Naive thymus-derived CD4-positive, alpha-beta T cell (primary cell): ENCODE measurements at regions of chr3 and their contacts with region 1.

Region 1: DNA sequence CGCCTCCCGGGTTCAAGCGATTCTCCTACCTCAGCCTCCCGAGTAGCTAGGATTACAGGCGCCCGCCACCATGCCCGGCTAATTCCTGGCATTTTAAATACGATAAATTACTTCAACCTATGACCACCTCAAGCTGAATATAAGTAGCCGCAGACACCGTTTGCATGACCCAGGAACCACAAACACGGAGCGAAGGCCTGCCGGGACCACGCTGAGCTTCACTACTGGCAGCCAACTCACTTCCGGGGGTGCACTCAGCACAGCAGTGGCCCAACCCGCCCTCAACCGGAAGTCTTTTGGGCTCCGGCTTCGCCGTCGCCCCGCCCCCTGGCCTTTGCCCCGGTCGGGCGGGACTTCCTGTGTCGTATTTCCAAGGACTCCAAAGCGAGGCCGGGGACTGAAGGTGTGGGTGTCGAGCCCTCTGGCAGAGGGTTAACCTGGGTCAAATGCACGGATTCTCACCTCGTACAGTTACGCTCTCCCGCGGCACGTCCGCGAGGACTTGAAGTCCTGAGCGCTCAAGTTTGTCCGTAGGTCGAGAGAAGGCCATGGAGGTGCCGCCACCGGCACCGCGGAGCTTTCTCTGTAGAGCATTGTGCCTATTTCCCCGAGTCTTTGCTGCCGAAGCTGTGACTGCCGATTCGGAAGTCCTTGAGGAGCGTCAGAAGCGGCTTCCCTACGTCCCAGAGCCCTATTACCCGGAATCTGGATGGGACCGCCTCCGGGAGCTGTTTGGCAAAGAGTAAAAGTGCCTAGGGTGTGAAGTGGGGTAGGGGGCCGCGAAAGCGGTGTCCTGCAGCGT is at the start of gene TIMMDC1:
- DNase-seq: peak; percentile 95 to 98 (median 97)
- ATAC-seq: peak; percentile 99
- H3K4me3 ChIP-seq: peak within 1 kb of the TSS; percentile 97
- H3K4me3 Mint-ChIP-seq: peak within 1 kb of the TSS; percentile 95 to 100 (median 99)
- H3K27ac ChIP-seq: peak within 1 kb of the TSS; percentile 96
- H3K27ac Mint-ChIP-seq: peak within 1 kb of the TSS; percentile 98 to 100 (median 99)
- H3K4me1 ChIP-seq: peaks cover 18% of the 10 kb centered on the region in 2 donors
- H3K4me1 Mint-ChIP-seq: peaks cover 22 to 41% (median 34%) of the 10 kb centered on the region in 7 donors
- H3K27me3 ChIP-seq: no peaks in the 10 kb centered on the region
- H3K27me3 Mint-ChIP-seq: no peaks in the 10 kb centered on the region
- total RNA-seq, gene TIMMDC1: 27.1 to 80.1 (median 73.4) TPM

Region 2: DNA sequence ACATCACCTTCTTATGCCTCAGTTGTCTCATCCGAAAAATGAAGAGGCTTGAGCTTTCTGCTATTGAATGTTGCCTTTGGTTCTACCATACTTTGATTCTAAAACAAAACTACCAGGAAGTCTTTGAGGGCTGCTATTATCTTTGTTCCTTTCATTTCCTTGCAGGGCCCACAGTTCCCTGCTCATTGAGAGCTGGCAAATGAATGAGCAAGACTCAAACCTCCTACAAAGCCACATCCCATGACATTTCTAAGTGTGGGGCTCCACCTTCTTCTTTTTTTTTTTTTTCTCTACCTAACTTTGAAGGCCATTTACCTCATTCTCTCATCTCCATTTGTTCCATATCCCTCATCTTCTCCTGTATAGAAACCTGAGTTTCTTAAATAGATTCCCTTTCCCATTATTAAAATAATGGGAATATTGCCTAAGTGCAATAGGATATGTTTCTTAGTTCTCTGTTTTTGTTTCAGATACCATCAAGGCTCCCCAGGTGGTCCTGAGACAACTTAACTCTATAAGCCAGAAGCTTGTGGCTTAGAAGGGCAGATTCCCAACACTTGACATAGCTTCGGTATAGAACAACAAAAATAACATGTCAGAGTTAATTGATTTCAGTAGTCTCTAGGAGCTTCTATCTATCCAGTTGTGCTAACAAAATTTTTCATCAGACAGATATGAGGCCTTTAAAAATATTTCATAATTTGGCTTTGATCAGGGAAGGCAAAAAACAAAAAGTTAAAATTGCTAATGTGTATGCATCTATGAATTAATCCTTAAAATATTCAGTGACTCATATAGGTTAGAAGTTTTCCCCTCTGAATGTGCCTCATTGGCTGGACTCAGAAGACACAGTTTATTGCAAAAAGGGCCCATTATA is 1837.2 kb before region 1 on chr3:
- CTCF ChIA-PET with region 1: no interaction called
- POLR2A ChIA-PET with region 1: no interaction called
- intact Hi-C with region 1: no loop called
- DNase-seq: no peak
- ATAC-seq: no peak
- H3K4me3 ChIP-seq: no peak overlapping the region
- H3K4me3 Mint-ChIP-seq: no peak overlapping the region
- H3K27ac ChIP-seq: no peak overlapping the region
- H3K27ac Mint-ChIP-seq: no peak overlapping the region
- H3K4me1 ChIP-seq: no peaks in the 10 kb centered on the region
- H3K4me1 Mint-ChIP-seq: no peaks in the 10 kb centered on the region
- H3K27me3 ChIP-seq: no peaks in the 10 kb centered on the region
- H3K27me3 Mint-ChIP-seq: no peaks in the 10 kb centered on the region

Region 3: DNA sequence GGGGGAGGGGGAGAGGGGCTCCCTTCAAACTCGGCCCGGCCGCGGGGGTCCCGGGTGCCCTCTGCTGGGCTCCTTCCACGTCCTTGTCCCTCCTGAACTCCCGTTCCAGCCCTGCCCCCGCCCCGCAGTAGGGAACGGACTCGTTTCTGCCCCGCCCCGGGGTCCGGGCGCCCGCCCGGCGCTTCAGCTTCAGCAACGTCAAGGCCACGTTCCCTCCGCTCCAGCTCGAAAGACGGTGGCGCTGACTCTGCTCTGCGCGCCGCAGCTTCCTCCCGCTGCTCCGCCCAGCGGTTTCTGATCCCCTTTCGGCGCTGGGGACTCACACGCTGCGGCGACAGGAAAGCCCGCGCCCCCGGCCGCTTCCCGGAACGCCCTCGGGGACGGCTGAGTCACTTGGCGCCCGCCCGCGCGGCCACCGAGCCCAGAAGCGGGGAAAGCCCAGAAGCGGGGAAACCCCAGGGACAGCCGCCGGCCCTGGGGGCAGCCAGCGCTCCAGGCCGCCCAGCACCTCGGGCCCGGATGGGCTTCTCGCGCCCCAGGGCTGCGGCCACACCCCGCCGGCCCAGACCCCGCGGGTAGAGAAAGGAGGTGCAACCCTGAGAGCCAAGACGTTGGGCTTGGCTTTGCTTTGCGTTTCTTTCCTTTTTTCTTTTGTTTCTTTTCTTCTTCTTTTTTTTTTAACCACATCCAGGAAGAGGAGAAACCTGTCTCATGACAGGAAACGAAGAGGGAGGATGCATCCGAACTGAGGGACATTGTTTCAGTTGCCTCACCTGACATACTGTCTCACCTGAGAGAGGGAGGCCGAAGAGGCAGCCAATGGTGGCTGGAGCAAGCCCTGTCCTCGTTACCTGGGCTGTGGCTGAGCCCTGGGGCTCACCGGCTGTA is 175.3 kb before region 1 on chr3:
- CTCF ChIA-PET with region 1: no interaction called
- POLR2A ChIA-PET with region 1: interaction called, 4 read pairs
- intact Hi-C with region 1: loop called (anchors 1 kb)
- DNase-seq: peak; percentile 77 to 96 (median 81)
- ATAC-seq: peak; percentile 90
- H3K4me3 ChIP-seq: peak overlapping the region; percentile 65
- H3K4me3 Mint-ChIP-seq: peak overlapping the region; percentile 84 to 96 (median 90)
- H3K27ac ChIP-seq: peak overlapping the region; percentile 81
- H3K27ac Mint-ChIP-seq: peak overlapping the region; percentile 90 to 99 (median 95)
- H3K4me1 ChIP-seq: peaks cover 10 to 14% of the 10 kb centered on the region in 2 donors
- H3K4me1 Mint-ChIP-seq: peaks cover 12 to 30% (median 21%) of the 10 kb centered on the region in 7 donors
- H3K27me3 ChIP-seq: no peaks in the 10 kb centered on the region
- H3K27me3 Mint-ChIP-seq: peaks cover 0 to 57% (median 0%) of the 10 kb centered on the region in 5 donors

Region 4: DNA sequence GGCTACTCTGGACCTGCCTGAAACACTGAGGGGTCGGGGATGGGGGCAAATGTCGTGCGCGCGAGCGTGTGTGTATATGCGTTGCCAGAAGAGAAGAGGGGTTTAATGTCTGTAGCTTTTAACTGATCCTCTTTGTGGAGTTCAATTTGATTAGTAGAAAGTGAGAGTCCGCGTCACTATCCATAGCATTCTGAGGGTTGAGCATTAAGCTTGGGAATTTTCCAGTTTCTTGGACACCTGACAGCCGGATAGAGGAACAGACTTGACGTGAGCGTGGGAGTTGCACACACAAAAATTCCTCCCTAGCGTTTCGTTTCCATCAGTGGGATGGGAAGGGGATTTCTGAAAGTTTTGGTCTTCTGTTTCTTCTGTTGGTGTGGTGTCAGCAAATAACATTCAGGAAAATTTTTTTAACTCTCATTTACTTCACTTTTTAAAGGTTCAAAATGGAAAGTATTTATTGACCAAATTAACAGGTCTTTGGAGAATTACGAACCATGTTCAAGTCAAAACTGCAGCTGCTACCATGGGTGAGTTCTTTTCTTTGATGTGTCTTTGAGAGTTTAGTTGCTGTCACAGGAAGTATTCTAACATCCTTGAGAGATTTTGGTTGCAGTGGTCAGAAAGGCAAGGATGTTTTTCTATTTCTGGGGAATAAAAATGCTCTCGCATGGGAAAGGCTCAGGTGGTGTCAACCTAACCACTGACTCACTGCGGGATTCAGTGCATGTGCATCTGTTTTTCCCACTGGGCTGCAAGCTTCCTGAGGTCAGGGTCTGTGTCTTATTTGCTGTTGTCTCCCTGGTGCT is 28.8 kb before region 1 on chr3:
- CTCF ChIA-PET with region 1: interaction called, 3 read pairs
- POLR2A ChIA-PET with region 1: interaction called, 92 read pairs
- intact Hi-C with region 1: loop called (anchors 1 kb)
- DNase-seq: peak in 7 of 9 donors; percentile 10 to 32 (median 24)
- ATAC-seq: peak; percentile 48
- H3K4me3 ChIP-seq: peak overlapping the region; percentile 86
- H3K4me3 Mint-ChIP-seq: peak overlapping the region; percentile 90 to 97 (median 94)
- H3K27ac ChIP-seq: peak overlapping the region; percentile 88
- H3K27ac Mint-ChIP-seq: peak overlapping the region; percentile 83 to 95 (median 89)
- H3K4me1 ChIP-seq: peaks cover 12% of the 10 kb centered on the region in 2 donors
- H3K4me1 Mint-ChIP-seq: peaks cover 27 to 35% (median 30%) of the 10 kb centered on the region in 7 donors
- H3K27me3 ChIP-seq: no peaks in the 10 kb centered on the region
- H3K27me3 Mint-ChIP-seq: no peaks in the 10 kb centered on the region

Region 5: GRCh38 chr3:119559441-119559963 is 61.1 kb after region 1 on chr3 and contains the start of gene CD80:
- CTCF ChIA-PET with region 1: no interaction called
- POLR2A ChIA-PET with region 1: no interaction called
- intact Hi-C with region 1: loop called in 1 of 2 experiments (anchors 1 kb)
- DNase-seq: peak in 7 of 9 donors; percentile 14 to 63 (median 33)
- ATAC-seq: peak; percentile 76
- H3K4me3 ChIP-seq: no peak within 1 kb of the TSS
- H3K4me3 Mint-ChIP-seq: peak within 1 kb of the TSS in 2 of 10 donors; percentile 12 to 81
- H3K27ac ChIP-seq: no peak within 1 kb of the TSS
- H3K27ac Mint-ChIP-seq: peak within 1 kb of the TSS in 2 of 9 donors; percentile 68 to 71
- H3K4me1 ChIP-seq: peaks cover 0 to 6% of the 10 kb centered on the region in 2 donors
- H3K4me1 Mint-ChIP-seq: peaks cover 0 to 64% (median 8%) of the 10 kb centered on the region in 7 donors
- H3K27me3 ChIP-seq: no peaks in the 10 kb centered on the region
- H3K27me3 Mint-ChIP-seq: peaks cover 0 to 5% (median 0%) of the 10 kb centered on the region in 5 donors
- total RNA-seq, gene CD80: 0.13 to 15.1 (median 1.2) TPM in 3 of 5 experiments, not detected in the others

Region 6: DNA sequence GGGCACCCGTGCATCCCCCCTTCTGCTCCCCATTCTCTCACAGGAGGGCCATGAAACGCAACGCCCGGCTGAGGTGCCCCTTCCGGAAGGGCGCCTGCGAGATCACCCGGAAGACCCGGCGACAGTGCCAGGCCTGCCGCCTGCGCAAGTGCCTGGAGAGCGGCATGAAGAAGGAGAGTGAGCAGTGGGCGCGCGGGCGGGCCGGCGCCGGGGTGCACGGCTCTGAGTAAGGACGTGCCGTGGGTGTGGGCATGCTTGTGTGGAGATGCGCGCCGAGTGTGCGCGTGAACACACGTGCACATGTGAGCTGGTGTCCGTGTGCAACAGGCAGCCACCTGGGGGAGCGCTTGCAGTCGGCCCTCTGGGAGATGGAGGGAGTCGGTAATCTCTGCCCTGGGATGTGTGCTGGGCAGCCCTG is 311.6 kb after region 1 on chr3:
- CTCF ChIA-PET with region 1: no interaction called
- POLR2A ChIA-PET with region 1: no interaction called
- intact Hi-C with region 1: loop called in 1 of 2 experiments (anchors 1 kb)
- DNase-seq: peak; percentile 17 to 57 (median 49)
- ATAC-seq: peak; percentile 83
- H3K4me3 ChIP-seq: peak overlapping the region; percentile 80
- H3K4me3 Mint-ChIP-seq: peak overlapping the region; percentile 82 to 94 (median 88)
- H3K27ac ChIP-seq: peak overlapping the region; percentile 33
- H3K27ac Mint-ChIP-seq: peak overlapping the region; percentile 44 to 93 (median 81)
- H3K4me1 ChIP-seq: peaks cover 0 to 8% of the 10 kb centered on the region in 2 donors
- H3K4me1 Mint-ChIP-seq: peaks cover 0 to 13% (median 10%) of the 10 kb centered on the region in 7 donors
- H3K27me3 ChIP-seq: no peaks in the 10 kb centered on the region
- H3K27me3 Mint-ChIP-seq: peaks cover 0 to 11% (median 0%) of the 10 kb centered on the region in 5 donors

Region 7: DNA sequence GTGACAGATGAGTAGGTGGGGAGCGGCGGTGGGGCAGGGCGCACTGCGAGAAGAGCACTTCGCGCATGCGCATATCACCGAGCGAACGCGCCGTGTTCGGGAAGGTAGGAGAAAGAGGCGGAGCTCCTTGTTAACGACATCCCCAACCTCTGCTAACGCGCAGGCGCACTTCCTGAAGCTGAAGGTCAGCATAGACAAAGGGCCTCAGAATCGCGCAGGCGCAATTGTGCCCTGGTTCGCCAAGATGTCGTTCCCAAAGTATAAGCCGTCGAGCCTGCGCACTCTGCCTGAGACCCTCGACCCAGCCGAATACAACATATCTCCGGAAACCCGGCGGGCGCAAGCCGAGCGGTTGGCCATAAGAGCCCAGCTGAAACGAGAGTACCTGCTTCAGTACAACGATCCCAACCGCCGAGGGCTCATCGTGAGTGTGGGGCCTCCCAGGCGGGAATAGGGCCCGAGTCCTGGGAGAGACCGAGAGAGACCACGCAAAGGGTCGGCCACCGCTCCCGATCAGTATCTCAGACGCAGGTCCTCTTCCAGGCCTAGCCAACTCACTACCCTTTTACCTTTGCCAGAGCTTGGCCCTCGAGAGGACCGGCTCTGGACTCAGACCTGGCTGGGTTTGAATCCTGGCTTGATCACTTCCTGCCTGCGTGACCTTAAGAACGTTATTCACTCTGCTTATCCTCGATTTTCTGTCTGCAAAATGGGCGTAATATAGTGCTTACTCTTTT is 1097.9 kb after region 1 on chr3 and contains the start of gene NDUFB4:
- CTCF ChIA-PET with region 1: no interaction called
- POLR2A ChIA-PET with region 1: no interaction called
- intact Hi-C with region 1: loop called in 1 of 2 experiments (anchors 10 kb)
- DNase-seq: peak; percentile 84 to 97 (median 93)
- ATAC-seq: peak; percentile 97
- H3K4me3 ChIP-seq: peak within 1 kb of the TSS; percentile 99
- H3K4me3 Mint-ChIP-seq: peak within 1 kb of the TSS in 8 of 10 donors; percentile 85 to 99 (median 96)
- H3K27ac ChIP-seq: peak within 1 kb of the TSS; percentile 92
- H3K27ac Mint-ChIP-seq: peak within 1 kb of the TSS in 5 of 9 donors; percentile 94 to 99 (median 98)
- H3K4me1 ChIP-seq: peaks cover 25 to 27% of the 10 kb centered on the region in 2 donors
- H3K4me1 Mint-ChIP-seq: peaks cover 0 to 20% (median 11%) of the 10 kb centered on the region in 7 donors
- H3K27me3 ChIP-seq: no peaks in the 10 kb centered on the region
- H3K27me3 Mint-ChIP-seq: peaks cover 0 to 20% (median 0%) of the 10 kb centered on the region in 5 donors
- total RNA-seq, gene NDUFB4: 63.4 to 126 (median 76.2) TPM